Astrocyte of the cerebellum (primary cell): ENCODE measurements at regions of chr7 and their contacts with region 1.

Region 1: GRCh38 chr7:135414850-135415439 is 95.0 kb downstream of the CNOT4 start:
- DNase-seq: peak; percentile 20
- H3K4me3 ChIP-seq: no peak overlapping the region
- CTCF ChIP-seq: peak; percentile 59

Region 2: DNA sequence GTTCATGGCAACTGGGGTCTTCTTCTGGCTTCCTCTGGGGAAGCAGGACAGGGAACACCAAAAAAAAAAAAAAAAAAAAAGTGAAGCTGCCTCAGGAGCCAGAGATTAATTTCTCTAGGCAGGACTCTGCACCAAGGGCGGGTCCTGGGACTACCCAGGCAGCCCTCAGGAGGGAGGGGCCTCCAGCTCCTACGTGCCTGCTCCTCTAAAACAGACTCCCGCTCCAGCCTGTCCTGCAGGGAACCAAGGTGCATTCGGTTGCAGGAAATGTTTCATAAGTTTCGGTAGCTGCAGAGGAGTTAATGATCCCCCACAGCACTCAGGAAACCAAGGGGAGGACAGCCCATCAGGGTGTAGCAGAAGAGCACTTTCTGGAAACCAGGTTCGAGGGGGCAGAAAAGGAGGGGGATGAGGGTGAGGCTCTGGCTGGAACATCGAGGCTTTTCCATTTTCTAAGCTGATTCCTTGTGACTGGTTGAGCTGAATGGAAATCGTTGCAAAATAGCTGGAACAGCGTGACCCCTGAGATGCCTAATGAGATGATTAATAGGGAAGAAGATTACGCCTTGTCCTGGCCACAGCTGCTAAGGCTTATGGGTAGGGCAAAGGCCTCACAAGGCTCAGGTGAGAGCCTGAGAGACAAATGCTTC is 97.1 kb before region 1 on chr7:
- in situ Hi-C with region 1: loop called (anchors 5 kb)
- DNase-seq: no peak
- H3K4me3 ChIP-seq: no peak overlapping the region
- CTCF ChIP-seq: no peak

Region 3: DNA sequence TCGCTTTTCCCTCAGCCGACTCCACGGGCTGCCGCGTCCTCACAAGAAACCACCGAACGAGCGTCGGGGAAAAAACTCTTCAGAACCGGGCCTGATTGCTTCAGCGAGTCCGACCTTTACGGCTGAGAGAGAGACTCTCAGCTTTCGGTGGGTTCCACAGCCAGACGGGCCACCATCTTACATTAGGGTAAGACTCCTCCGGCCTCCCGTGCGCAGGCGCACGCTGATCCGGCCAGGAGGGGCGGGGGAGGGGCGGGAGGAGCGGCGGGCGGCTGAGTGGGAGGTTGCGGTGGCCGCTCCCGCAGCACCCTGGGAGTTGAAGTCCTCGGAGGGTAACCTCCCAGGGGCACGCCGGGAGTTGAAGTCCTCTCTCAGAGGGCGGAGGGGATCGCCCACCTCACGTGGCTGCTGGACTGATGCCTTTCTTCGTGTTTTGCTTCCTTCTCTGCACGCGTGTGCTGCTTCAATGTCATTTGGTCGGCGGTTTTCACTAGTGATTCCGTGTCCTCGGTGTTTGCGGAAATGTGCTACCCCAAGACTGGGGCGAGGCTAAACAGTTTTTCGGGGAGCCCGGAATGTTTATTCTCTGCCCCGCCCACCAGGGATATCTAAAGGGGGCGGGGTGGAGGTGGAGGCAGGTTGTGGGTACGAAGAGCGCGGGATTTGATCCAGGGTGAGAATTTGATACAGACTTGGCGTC is 95.1 kb after region 1 on chr7 and contains the start of gene CNOT4:
- in situ Hi-C with region 1: loop called (anchors 5 kb)
- DNase-seq: peak; percentile 89
- H3K4me3 ChIP-seq: peak within 1 kb of the TSS; percentile 97
- CTCF ChIP-seq: no peak